ENCODE measurements at regions of chr7 and their contacts with region 1.

Region 1: DNA sequence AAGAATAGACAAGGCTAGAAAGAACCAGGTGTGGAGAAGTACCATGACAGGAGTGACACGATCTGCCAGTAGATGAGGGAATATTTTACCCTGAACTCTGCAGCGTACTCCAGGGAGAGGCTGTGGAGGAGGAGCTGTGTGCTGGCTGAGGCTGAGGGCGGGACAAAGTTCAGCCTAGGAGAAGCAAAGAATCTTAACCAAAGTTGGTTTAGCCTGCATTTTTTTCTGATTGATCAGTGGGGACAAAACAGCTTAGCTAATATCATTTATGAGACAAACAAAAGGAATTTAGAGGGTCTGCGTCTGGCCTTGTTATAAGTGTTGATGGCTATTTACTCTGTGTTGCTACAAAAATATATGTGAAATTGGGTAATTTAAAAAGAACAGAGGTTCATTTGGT is 5.2 kb upstream of the NPSR1 start:
- DNase-seq: no peak
- ATAC-seq: no peak
- H3K4me3 Mint-ChIP-seq: no peak overlapping the region
- H3K27ac Mint-ChIP-seq: no peak overlapping the region
- H3K4me1 Mint-ChIP-seq: no peaks in the 10 kb centered on the region
- H3K27me3 Mint-ChIP-seq: no peaks in the 10 kb centered on the region
- CTCF ChIP-seq: no peak

Region 2: DNA sequence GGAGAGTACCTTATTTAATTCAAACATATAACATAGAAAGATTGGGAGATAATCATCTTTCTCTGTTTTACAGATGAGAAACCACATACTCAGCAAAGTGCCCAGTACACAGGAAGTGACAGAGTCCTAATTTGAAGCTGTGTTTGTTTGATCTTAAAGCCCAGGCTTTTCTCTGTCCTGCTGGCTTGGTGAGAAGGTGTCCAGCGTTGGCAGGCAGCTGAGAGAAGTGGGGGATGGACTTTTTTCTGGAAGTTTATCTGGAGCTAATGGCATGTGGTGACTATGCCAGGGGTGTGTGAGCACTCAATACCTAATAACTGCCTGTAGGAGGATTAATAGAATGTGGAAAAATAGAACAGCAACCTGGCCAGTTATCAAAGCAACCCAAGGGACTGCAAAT is 66.1 kb after region 1 on chr7:
- CTCF ChIA-PET with region 1: no interaction called
- POLR2A ChIA-PET with region 1: no interaction called
- intact Hi-C with region 1: loop called (anchors 10 kb)
- DNase-seq: no peak
- ATAC-seq: no peak
- H3K4me3 Mint-ChIP-seq: no peak overlapping the region
- H3K27ac Mint-ChIP-seq: no peak overlapping the region
- H3K4me1 Mint-ChIP-seq: no peaks in the 10 kb centered on the region
- H3K27me3 Mint-ChIP-seq: no peaks in the 10 kb centered on the region
- CTCF ChIP-seq: no peak